Cardiac septum (tissue), 1 donor: ENCODE measurements at regions of chr17 and their contacts with region 1.

Region 1: DNA sequence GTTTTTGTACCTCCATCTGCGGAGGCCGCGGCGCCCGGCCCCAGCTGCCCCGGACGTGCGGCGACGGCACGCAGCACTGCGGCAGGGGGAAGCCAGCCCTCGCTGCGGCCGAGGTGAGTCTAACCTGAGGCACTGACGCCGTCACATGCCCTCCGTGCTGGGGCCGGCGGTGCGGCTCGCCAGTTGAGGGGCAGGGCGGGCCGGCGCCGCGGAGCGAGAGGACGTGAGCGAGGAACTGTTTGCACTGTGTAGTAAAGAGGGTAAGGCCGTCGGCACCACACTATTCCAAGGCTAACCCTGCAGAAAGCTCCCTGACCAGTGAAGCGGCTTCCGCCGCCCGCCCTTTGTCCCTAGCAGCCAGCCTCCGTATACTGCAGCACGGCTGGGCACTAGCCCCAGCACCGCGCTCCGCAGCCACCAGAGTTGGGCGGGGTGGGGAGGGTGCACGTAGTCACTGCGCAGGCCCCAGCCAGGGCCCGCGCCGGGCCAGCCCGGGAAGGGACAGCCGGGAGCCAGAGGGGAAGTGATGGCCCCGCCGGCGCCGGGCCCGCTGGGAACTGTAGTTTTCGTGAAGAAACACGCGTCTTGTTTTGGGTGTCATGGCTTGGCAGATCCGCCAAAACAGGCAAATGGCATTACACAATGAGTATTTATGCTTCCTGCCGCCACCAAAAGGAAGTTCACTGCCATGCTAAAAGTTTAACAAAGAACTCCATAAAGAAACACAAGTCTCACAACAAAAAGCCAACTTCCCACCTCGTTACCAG is 580 bp upstream of the KANSL1 start:
- DNase-seq: peak; percentile 99

Region 2: DNA sequence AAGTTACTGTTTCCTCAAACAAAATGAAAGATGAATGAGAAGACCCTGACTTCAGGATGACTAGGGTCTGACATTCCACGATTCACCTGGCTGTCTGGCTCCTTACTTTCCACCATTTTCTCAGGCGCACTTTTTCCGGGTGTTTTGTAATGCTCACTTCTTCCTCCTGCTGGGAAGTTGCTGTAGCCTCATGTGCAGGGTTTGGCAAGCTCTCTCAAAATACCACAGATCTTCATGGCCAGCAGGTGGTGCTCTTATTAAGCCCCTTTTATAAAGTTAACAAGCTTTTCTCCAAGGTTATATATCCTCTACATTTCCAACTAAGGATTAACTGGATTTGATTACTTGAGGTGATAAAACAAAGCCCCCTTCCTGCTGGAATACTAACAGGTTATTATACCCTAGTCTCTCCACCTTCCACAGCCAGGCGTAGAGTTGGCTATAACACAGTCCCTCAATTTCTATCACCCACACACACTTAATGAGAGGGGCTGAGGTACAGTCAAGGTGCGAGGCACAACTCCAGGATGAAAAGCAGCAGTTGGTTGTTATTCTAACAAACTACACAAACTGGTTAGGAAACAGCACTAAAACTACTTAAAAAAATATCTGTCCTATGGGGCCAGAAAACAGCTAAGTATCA is 149.4 kb before region 1 on chr17:
- intact Hi-C with region 1: loop called (anchors 1 kb)
- DNase-seq: no peak

Region 3: DNA sequence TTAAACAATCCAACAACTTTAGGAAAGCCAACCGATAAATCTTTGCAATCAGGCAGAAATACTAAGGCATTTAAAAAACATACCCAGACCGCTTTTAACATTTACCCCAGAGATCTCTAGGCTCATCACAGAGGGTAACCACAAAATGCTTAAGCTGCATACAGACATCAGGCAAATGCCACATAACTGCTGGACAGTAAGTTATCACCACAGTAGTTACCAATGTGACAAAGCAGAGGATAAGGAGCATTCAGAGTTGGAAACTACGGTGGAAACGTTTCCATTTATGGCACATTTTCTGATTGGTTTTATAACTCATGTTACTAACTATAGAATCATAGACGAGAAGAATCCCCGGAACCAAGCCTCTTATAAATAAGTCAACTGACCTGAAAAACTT is 78.1 kb before region 1 on chr17:
- intact Hi-C with region 1: loop called (anchors 5 kb)
- DNase-seq: no peak

Region 4: GRCh38 chr17:46157443-46158062 is 36.3 kb before region 1 on chr17:
- intact Hi-C with region 1: loop called (anchors 5 kb)
- DNase-seq: no peak